HepG2 (cell line): ENCODE measurements at regions of chr4 and their contacts with region 1.

Region 1: GRCh38 chr4:76949276-76950051 is at the start of gene SEPTIN11:
- DNase-seq: peak; percentile 85
- ATAC-seq: peak; percentile 86
- H3K4me3 ChIP-seq: peak within 1 kb of the TSS; percentile 88 to 94 (median 92)
- H3K27ac ChIP-seq: peak within 1 kb of the TSS; percentile 82
- H3K4me1 ChIP-seq: peaks cover 29% of the 10 kb centered on the region
- H3K27me3 ChIP-seq: no peaks in the 10 kb centered on the region
- CTCF ChIP-seq: no peak
- EP300 ChIP-seq: 0 out of 4 replicates have a peak, but pooled peaks of 1 of the 2 experiments have one; percentile 16
- POLR2A ChIP-seq: peak in 1 of 2 experiments; percentile 91; a peak in 2 of 4 replicates
- RAD21 ChIP-seq: 0 out of 2 replicates have a peak, but pooled peaks have one; percentile 7
- total RNA-seq, gene SEPTIN11: 47.3 and 87.4 TPM in 2 replicates

Region 2: GRCh38 chr4:76830964-76831703 is 118.3 kb before region 1 on chr4:
- CTCF ChIA-PET with region 1: no interaction called
- POLR2A ChIA-PET with region 1: interaction called, 10 read pairs
- in situ Hi-C with region 1: no loop called
- intact Hi-C with region 1: loop called (anchors 2 kb)
- DNase-seq: peak; percentile 94
- ATAC-seq: peak; percentile 91
- H3K4me3 ChIP-seq: peak overlapping the region; percentile 77 to 81 (median 80)
- H3K27ac ChIP-seq: peak overlapping the region; percentile 92
- H3K4me1 ChIP-seq: peaks cover 21% of the 10 kb centered on the region
- H3K27me3 ChIP-seq: no peaks in the 10 kb centered on the region; a peak in 1 of 5 replicates
- CTCF ChIP-seq: no peak
- EP300 ChIP-seq: peak; percentile 2 to 81; a peak in 2 of 4 replicates
- POLR2A ChIP-seq: peak; percentile 75 to 91
- RAD21 ChIP-seq: no peak

Region 3: GRCh38 chr4:76856243-76857073 is 93.0 kb before region 1 on chr4:
- CTCF ChIA-PET with region 1: no interaction called
- POLR2A ChIA-PET with region 1: no interaction called
- in situ Hi-C with region 1: no loop called
- intact Hi-C with region 1: loop called (anchors 5 kb)
- DNase-seq: peak; percentile 89
- ATAC-seq: peak; percentile 96
- H3K4me3 ChIP-seq: no peak overlapping the region; a peak in 2 of 6 replicates
- H3K27ac ChIP-seq: no peak overlapping the region
- H3K4me1 ChIP-seq: peaks cover 47% of the 10 kb centered on the region
- H3K27me3 ChIP-seq: no peaks in the 10 kb centered on the region
- CTCF ChIP-seq: no peak
- EP300 ChIP-seq: peak; percentile 57 to 66; a peak in 2 of 4 replicates
- POLR2A ChIP-seq: no peak
- RAD21 ChIP-seq: no peak

Region 4: DNA sequence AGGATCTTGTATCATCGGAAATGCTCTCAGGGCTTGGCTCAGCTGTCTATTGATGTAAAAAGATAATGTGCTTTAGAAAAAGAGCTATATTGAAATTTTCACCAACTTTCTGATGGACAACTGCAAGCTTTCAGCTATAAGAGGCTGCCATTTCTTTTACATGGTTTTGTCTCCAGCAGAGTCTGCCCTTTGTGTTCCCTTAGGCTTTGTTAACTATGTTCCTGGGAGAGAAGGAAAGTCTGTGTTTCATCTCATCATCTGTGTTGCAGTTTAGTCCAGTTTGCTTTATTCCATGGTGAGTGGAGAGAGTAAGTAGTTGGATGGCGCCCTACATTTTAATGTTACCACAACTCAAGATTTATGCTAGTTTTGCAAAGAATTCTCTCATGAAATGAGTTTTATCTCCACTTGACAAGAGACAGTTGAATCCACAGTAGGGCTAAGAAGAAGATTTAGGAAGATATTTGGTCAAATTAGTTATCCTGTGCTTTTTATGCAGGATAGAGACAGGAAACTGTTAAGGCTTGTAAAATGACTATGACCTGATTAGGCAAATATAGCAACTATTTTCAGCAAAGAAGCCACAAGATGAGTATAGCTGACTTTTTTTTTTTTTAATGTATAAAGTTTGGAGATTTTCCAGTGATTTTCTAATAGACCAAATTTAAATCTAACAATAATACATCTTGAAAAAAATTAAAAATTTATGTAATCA is 16.6 kb after region 1 on chr4:
- CTCF ChIA-PET with region 1: no interaction called
- POLR2A ChIA-PET with region 1: interaction called, 4 read pairs
- in situ Hi-C with region 1: no loop called
- intact Hi-C with region 1: loop called (anchors 1 kb)
- DNase-seq: no peak
- ATAC-seq: no peak
- H3K4me3 ChIP-seq: no peak overlapping the region
- H3K27ac ChIP-seq: no peak overlapping the region
- H3K4me1 ChIP-seq: no peaks in the 10 kb centered on the region
- H3K27me3 ChIP-seq: no peaks in the 10 kb centered on the region; a peak in 1 of 5 replicates
- CTCF ChIP-seq: no peak
- EP300 ChIP-seq: no peak
- POLR2A ChIP-seq: no peak
- RAD21 ChIP-seq: no peak

Region 5: DNA sequence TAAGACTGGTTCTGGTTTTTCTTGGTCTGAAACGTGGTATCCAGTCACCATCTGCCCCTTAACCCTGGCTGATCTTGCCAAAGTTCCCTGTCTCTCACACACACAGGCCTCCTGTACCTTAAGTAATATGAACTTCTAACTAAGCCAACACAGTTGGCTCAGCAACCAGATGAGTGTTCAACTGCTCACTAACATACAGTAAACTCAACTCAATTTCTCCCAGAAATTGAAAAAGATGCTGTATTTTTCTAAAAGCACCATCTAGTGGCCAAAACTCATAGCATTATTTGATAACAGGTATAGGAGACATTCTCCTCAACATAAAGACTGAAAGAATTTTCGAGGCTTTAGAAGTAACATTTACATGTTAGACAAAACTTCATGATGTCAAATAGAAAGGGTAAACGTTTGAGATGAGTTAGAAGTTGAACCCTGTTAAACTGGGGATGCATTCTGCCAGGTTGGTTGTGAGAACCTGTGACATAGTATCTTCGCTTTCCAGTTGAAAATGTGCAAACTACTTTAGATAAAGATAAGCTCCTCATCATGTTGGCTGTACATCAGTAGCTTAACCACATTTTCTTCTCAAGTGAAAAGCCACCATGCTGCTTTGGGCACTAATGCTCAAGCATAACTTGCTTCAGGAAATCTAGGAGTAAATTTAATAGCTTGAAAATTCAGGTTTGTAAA is 95.1 kb after region 1 on chr4:
- CTCF ChIA-PET with region 1: no interaction called
- POLR2A ChIA-PET with region 1: no interaction called
- in situ Hi-C with region 1: no loop called
- intact Hi-C with region 1: loop called (anchors 2 kb)
- DNase-seq: peak; percentile 9
- ATAC-seq: peak; percentile 39
- H3K4me3 ChIP-seq: no peak overlapping the region
- H3K27ac ChIP-seq: no peak overlapping the region
- H3K4me1 ChIP-seq: peaks cover 13% of the 10 kb centered on the region
- H3K27me3 ChIP-seq: no peaks in the 10 kb centered on the region
- CTCF ChIP-seq: peak; percentile 58
- EP300 ChIP-seq: no peak
- POLR2A ChIP-seq: no peak
- RAD21 ChIP-seq: no peak

Region 6: DNA sequence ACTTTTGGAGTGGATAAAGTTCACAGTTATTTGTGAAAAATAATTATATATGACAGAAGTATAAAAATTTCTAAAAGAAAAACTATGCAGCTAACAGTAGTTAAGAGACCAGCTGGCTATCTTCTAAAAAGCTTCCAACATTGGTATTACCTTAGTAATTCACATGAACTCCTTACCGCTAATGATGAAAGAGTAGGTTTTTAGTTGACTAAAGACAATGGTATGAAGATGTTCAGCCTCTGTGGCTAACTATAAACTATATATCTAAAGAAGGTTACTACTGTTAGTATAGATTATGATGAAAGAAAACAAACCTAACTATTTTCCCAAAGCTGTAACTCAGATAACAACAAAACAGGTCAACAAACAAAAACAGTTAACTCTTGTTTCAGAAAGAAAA is 115.9 kb after region 1 on chr4:
- CTCF ChIA-PET with region 1: no interaction called
- POLR2A ChIA-PET with region 1: no interaction called
- in situ Hi-C with region 1: no loop called
- intact Hi-C with region 1: no loop called
- DNase-seq: no peak
- ATAC-seq: no peak
- H3K4me3 ChIP-seq: no peak overlapping the region
- H3K27ac ChIP-seq: no peak overlapping the region
- H3K4me1 ChIP-seq: no peaks in the 10 kb centered on the region
- H3K27me3 ChIP-seq: no peaks in the 10 kb centered on the region; a peak in 1 of 5 replicates
- CTCF ChIP-seq: no peak
- EP300 ChIP-seq: no peak
- POLR2A ChIP-seq: no peak
- RAD21 ChIP-seq: no peak